Activated T-helper 2 cell treated with anti-CD3 and anti-CD28 coated beads, Interferon-gamma antibody, Interleukin-2, Interleukin-4, amounts not matched to agents 10 μg/mL and 5 μg/mL and 100 μg/mL, durations not matched to agents 14 hours and 24 hours and 36 hours (primary cell): ENCODE measurements at regions of chr2 and their contacts with region 1.

Region 1: GRCh38 chr2:198309673-198310280 is 505.4 kb downstream of the PLCL1 start:
- DNase-seq: peak; percentile 43
- H3K4me3 Mint-ChIP-seq: no peak overlapping the region
- H3K27ac Mint-ChIP-seq: no peak overlapping the region
- H3K4me1 Mint-ChIP-seq: peaks cover 7% of the 10 kb centered on the region
- H3K27me3 Mint-ChIP-seq: peaks cover 35% of the 10 kb centered on the region

Region 2: DNA sequence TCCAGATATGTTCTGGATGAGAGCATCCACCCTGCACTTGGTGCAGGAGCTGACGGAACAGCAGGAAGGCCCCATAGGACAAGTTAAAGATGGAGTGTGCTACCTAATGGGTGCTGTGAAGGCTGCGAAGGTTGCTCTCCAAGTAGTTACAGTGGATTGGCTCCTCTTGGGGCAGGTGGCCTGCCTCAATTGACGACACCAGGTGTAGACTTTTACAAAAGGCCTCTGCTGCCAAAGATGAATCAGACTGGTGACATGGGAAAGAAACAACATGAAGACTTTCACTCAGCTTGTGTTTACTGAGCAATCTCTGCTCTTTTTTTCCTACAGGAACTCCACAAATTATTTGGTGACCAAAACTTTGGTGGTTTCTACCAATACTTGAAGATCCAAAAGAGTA is 67.7 kb before region 1 on chr2:
- intact Hi-C with region 1: no loop called
- DNase-seq: no peak
- H3K4me3 Mint-ChIP-seq: no peak overlapping the region
- H3K27ac Mint-ChIP-seq: no peak overlapping the region
- H3K4me1 Mint-ChIP-seq: no peaks in the 10 kb centered on the region
- H3K27me3 Mint-ChIP-seq: peaks cover 10% of the 10 kb centered on the region

Region 3: GRCh38 chr2:199488772-199489400 is 1179.1 kb after region 1 on chr2:
- intact Hi-C with region 1: loop called (anchors 5 kb)
- DNase-seq: no peak
- H3K4me3 Mint-ChIP-seq: no peak overlapping the region
- H3K27ac Mint-ChIP-seq: no peak overlapping the region
- H3K4me1 Mint-ChIP-seq: no peaks in the 10 kb centered on the region
- H3K27me3 Mint-ChIP-seq: peaks cover 6% of the 10 kb centered on the region